ENCODE measurements at regions of chr12 and their contacts with region 1.

Region 1: DNA sequence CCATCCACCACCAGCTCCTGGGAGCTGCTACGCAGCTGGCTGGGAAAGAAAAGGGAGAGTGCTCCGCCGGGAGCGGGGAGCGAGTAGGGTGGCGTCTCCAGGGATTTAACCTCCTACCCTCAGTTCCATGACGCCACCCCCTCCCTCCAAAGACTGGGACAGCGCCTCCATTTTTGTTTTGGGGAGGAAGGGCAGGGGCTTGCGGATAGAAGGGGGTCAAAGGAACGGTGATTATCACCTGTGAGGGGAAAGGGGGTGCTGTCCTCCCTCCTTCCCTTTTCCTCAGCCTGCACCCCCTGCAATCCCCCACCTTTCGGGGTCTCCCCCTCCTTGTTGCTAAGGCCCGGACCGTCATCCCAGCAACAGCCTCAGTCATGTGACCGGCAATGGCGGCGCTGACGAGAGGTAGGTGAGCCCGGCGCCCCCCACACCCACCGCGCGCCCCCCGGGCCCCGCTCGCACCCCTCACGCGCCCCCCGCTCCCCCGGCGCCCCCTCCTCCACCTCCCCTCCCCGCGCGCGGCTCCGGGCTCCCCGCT is at the start of gene DTX3:
- DNase-seq: peak; percentile 50 to 62
- ATAC-seq: peak; percentile 41 to 65 (median 60)
- H3K4me3 ChIP-seq: peak within 1 kb of the TSS; percentile 58 to 87 (median 76)
- H3K27ac ChIP-seq: peak within 1 kb of the TSS; percentile 78 to 96 (median 90)
- H3K4me1 ChIP-seq: peaks cover 0 to 54% (median 25%) of the 10 kb centered on the region in 9 donors
- H3K27me3 ChIP-seq: peaks cover 0 to 21% (median 0%) of the 10 kb centered on the region in 7 donors
- CTCF ChIP-seq: no peak
- total RNA-seq, gene DTX3: 16.9 to 30.2 (median 22.2) TPM

Region 2: DNA sequence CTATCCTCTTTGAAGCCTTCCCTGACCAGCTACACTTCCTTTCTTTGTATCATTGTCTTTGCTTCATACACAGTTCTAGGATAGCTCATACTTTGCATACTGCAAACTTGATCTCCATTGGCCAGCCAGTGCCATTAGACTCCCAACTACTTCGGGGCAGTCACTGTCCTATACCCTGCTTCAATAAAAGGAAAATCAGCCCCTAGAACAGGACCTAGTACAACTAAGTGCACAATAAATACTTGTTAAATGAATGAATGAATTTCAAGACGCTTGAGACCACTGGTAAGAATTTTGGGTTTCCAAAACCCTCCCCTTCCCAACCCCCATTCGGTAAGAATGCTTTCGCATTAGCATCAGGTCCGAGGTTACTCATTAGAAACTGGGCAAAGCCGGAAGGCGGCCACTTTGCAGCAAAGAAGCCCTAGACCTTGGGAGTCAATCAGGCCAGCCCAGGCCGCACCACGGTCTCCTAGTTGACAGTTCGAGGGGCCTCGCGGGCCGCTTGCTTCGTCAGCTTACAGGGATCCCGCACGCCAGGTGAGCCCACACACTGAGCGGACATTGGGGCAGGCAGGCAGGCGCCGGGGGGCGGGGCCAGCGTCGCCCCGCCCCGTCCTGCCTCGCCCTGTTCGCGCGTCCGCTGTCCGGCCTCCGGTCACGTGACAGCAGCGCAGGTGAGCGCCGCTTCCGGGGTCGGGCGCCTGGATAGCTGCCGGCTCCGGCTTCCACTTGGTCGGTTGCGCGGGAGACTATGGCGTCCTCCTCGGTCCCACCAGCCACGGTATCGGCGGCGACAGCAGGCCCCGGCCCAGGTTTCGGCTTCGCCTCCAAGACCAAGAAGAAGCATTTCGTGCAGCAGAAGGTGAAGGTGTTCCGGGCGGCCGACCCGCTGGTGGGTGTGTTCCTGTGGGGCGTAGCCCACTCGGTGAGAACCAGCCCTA is 13.7 kb before region 1 on chr12 and contains the start of gene PIP4K2C:
- intact Hi-C with region 1: loop called in 1 of 10 experiments (anchors 2 kb)
- DNase-seq: peak; percentile 73 to 77
- ATAC-seq: peak; percentile 97 to 99 (median 98)
- H3K4me3 ChIP-seq: peak within 1 kb of the TSS; percentile 59 to 95 (median 82)
- H3K27ac ChIP-seq: peak within 1 kb of the TSS in 9 of 10 donors; percentile 65 to 87 (median 77)
- H3K4me1 ChIP-seq: peaks cover 0 to 21% (median 14%) of the 10 kb centered on the region in 9 donors
- H3K27me3 ChIP-seq: peaks cover 0 to 25% (median 7%) of the 10 kb centered on the region in 7 donors
- CTCF ChIP-seq: no peak
- total RNA-seq, gene PIP4K2C: 9.6 to 17.2 (median 14.7) TPM